GM12878 (cell line): ENCODE measurements at regions of chr17 and their contacts with region 1.

Region 1: GRCh38 chr17:82655038-82655479 is 6.8 kb upstream of the WDR45B start:
- DNase-seq: no peak
- ATAC-seq: no peak
- H3K4me3 ChIP-seq: no peak overlapping the region
- H3K27ac ChIP-seq: no peak overlapping the region
- H3K4me1 ChIP-seq: no peaks in the 10 kb centered on the region
- H3K27me3 ChIP-seq: no peaks in the 10 kb centered on the region
- CTCF ChIP-seq: no peak
- EP300 ChIP-seq: no peak
- POLR2A ChIP-seq: no peak
- RAD21 ChIP-seq: no peak

Region 2: GRCh38 chr17:82702231-82702927 is 47.3 kb after region 1 on chr17:
- CTCF ChIA-PET with region 1: no interaction called
- POLR2A ChIA-PET with region 1: no interaction called
- RAD21 ChIA-PET with region 1: no interaction called
- SMC1A ChIA-PET with region 1: no interaction called
- in situ Hi-C with region 1: no loop called
- intact Hi-C with region 1: no loop called
- DNase-seq: no peak
- ATAC-seq: no peak
- H3K4me3 ChIP-seq: no peak overlapping the region
- H3K27ac ChIP-seq: no peak overlapping the region
- H3K4me1 ChIP-seq: peaks cover 5% of the 10 kb centered on the region
- H3K27me3 ChIP-seq: no peaks in the 10 kb centered on the region; a peak in 1 of 4 replicates
- CTCF ChIP-seq: no peak
- EP300 ChIP-seq: no peak
- POLR2A ChIP-seq: no peak
- RAD21 ChIP-seq: no peak

Region 3: GRCh38 chr17:82740906-82741759 is 86.1 kb after region 1 on chr17:
- CTCF ChIA-PET with region 1: no interaction called
- POLR2A ChIA-PET with region 1: no interaction called
- RAD21 ChIA-PET with region 1: no interaction called
- SMC1A ChIA-PET with region 1: no interaction called
- in situ Hi-C with region 1: loop called (anchors 10 kb)
- intact Hi-C with region 1: no loop called
- DNase-seq: no peak
- ATAC-seq: no peak
- H3K4me3 ChIP-seq: no peak overlapping the region
- H3K27ac ChIP-seq: no peak overlapping the region
- H3K4me1 ChIP-seq: no peaks in the 10 kb centered on the region
- H3K27me3 ChIP-seq: no peaks in the 10 kb centered on the region
- CTCF ChIP-seq: no peak
- EP300 ChIP-seq: no peak
- POLR2A ChIP-seq: no peak
- RAD21 ChIP-seq: no peak